Ascending aorta (tissue), 2 donors: ENCODE measurements at regions of chr16 and their contacts with region 1.

Region 1: GRCh38 chr16:50024684-50025536 is at the start of gene CNEP1R1:
- DNase-seq: peak; percentile 81 to 97
- H3K4me3 ChIP-seq: peak within 1 kb of the TSS; percentile 85 to 92
- H3K27ac ChIP-seq: peak within 1 kb of the TSS; percentile 71 to 86
- H3K4me1 ChIP-seq: peaks cover 2 to 7% of the 10 kb centered on the region in 2 donors
- H3K27me3 ChIP-seq: no peaks in the 10 kb centered on the region
- CTCF ChIP-seq: peak; percentile 99 to 100 (median 100)
- total RNA-seq, gene CNEP1R1: 5.9 TPM

Region 2: DNA sequence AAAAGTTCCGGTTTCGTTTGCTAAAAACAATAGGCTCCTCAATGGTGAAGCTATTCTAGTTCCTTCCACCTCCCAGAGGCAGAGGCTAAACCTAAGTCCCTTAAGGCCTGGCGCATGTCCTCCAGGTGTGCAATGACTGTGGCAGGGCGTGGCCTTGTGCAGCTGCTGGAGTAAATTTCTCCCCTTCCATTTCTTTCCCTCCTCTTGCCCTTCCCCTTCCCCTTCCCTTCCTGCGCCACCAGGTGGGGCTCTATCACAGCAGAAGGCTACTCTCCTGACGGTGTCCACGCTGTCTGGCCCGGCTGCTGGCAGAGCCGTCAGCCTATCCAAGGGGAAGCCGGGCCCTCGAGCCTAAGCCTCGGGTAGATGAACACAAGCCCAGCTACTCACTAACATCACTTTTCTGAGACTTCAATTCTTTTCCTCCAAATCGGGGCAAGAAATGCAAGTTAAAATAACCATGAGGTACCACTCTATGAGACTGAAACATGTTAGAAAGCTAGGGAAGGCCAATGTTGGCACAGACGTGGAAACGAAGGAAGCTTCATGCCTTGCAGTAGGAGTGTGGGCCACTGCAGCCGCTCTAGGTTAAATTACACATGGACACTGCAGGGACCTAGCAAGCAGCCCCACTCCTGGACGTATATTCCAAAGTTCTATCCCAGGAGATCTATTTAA is 616.9 kb before region 1 on chr16:
- intact Hi-C with region 1: loop called (anchors 2 kb)
- DNase-seq: peak; percentile 26 to 86
- H3K4me3 ChIP-seq: no peak overlapping the region
- H3K27ac ChIP-seq: no peak overlapping the region
- H3K4me1 ChIP-seq: no peaks in the 10 kb centered on the region
- H3K27me3 ChIP-seq: no peaks in the 10 kb centered on the region
- CTCF ChIP-seq: peak; percentile 82 to 95 (median 91)

Region 3: DNA sequence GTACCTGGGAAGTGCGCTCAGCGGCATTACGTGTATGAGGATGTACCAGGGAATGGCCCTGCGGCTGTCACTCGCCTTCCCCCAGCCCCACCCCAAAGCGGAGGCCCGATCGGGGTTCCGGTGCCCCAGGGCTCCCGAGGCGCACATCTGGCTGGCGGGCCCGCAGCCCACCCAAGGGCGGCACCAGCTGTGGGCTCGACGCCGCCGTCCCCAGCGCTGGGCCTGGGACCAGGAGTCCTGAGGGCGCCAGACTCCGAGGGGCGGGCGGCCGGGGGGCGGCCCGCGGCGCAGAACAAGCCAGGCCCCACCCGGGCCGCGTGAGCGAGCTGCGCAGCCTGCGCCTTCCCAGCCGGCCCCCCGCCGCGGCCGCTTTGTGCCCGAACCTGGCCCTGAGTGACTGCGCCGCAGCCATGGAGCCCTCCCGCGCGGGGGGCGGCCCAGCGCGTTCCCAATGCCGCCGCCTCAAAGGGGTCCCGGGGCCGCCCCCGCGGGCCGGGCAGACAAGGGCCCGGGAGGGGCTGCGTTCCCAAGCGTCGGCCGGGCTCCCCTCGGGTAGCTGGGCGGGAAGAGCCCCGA is 186.4 kb before region 1 on chr16:
- intact Hi-C with region 1: no loop called
- DNase-seq: no peak
- H3K4me3 ChIP-seq: peak overlapping the region; percentile 37 to 56
- H3K27ac ChIP-seq: peak overlapping the region; percentile 22 to 60
- H3K4me1 ChIP-seq: peaks cover 40 to 54% of the 10 kb centered on the region in 2 donors
- H3K27me3 ChIP-seq: no peaks in the 10 kb centered on the region
- CTCF ChIP-seq: no peak

Region 4: DNA sequence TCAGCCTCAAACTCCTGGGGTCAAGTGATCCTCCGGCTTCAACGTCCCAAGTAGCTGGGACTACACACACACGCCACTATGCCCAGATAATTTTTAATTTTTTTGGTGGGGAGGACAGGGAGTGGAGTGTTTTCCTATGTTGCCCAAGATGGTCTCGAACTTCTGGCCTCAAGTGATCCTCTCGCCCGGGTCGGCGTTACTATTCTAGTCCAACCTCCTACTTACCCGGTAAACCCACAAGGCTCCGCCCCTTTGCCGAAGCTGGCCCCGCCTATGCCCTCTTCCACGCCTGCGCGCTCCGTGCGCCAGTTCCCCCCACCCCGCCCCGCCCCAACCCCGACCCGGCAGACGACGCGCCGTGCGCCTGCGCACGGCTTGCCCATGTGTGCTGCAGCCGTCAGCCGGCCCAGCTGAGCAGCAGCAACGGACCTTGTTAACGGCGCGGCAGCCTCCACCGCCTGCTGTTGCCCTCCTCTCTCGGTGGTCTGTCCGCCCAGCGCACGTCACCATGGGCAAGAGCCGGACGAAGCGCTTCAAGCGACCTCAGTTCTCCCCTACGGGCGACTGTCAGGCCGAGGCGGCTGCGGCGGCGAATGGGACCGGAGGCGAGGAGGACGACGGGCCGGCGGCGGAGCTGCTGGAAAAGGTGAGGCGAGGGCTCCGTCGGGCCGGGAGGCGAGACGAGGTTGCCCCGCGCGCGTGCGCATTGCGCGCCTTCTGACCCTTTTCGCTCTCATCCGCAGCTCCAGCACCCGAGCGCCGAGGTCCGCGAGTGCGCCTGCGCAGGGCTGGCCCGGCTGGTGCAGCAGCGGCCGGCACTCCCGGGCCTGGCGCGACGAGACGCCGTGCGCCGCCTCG is 40.9 kb after region 1 on chr16 and contains the start of gene HEATR3:
- intact Hi-C with region 1: loop called (anchors 1 kb)
- DNase-seq: peak; percentile 65 to 95
- H3K4me3 ChIP-seq: peak within 1 kb of the TSS; percentile 80 to 98
- H3K27ac ChIP-seq: peak within 1 kb of the TSS; percentile 90 to 92
- H3K4me1 ChIP-seq: peaks cover 4 to 20% of the 10 kb centered on the region in 2 donors
- H3K27me3 ChIP-seq: no peaks in the 10 kb centered on the region
- CTCF ChIP-seq: no peak
- total RNA-seq, gene HEATR3: 10.4 TPM

Region 5: GRCh38 chr16:50210266-50211038 is 185.5 kb after region 1 on chr16:
- intact Hi-C with region 1: loop called (anchors 1 kb)
- DNase-seq: peak in 1 of 2 donors; percentile 89
- H3K4me3 ChIP-seq: no peak overlapping the region
- H3K27ac ChIP-seq: peak overlapping the region; percentile 17 to 43
- H3K4me1 ChIP-seq: peaks cover 13 to 44% of the 10 kb centered on the region in 2 donors
- H3K27me3 ChIP-seq: no peaks in the 10 kb centered on the region
- CTCF ChIP-seq: peak; percentile 60 to 78 (median 63)

Region 6: DNA sequence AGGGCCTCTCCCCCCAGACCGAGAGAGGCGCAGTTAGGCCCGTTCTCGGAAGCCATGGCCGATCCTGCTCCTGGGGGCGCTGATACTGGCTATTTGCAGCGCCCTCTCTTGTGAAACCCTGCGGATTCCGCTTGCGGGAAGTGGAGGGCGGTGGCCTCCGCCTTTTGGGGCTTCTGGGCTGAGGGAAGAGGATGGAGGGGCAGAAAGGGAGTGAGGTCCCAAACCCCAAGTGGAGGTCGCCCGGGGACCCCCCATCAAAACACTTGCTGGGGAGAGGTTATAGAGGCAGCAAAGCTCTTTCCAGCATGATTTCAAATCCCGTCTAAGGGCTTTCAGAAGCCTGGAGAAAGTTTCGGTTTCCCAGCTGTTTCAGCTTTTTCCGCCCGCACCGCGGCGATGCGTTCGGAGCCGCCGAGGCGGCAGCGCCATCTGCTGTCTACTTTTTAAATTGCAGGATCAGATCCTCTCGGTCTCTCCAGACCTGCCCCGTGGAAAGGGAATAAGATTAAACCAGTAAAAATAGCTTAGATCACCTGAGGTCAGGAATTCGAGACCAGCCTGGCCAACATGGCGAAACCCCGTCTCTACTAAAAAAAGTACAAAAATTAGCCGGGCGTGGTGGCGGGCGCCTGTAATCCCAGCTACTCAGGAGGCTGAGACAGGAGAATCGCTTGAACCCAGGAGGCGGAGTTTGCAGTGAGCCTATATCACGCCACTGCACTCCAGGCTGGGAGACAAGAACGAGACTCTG is 640.4 kb after region 1 on chr16:
- intact Hi-C with region 1: loop called (anchors 2 kb)
- DNase-seq: peak in 1 of 2 donors; percentile 88
- H3K4me3 ChIP-seq: peak overlapping the region; percentile 41 to 61
- H3K27ac ChIP-seq: peak overlapping the region; percentile 58 to 65
- H3K4me1 ChIP-seq: peaks cover 0 to 5% of the 10 kb centered on the region in 2 donors
- H3K27me3 ChIP-seq: no peaks in the 10 kb centered on the region
- CTCF ChIP-seq: peak; percentile 82 to 93 (median 83)

Region 7: DNA sequence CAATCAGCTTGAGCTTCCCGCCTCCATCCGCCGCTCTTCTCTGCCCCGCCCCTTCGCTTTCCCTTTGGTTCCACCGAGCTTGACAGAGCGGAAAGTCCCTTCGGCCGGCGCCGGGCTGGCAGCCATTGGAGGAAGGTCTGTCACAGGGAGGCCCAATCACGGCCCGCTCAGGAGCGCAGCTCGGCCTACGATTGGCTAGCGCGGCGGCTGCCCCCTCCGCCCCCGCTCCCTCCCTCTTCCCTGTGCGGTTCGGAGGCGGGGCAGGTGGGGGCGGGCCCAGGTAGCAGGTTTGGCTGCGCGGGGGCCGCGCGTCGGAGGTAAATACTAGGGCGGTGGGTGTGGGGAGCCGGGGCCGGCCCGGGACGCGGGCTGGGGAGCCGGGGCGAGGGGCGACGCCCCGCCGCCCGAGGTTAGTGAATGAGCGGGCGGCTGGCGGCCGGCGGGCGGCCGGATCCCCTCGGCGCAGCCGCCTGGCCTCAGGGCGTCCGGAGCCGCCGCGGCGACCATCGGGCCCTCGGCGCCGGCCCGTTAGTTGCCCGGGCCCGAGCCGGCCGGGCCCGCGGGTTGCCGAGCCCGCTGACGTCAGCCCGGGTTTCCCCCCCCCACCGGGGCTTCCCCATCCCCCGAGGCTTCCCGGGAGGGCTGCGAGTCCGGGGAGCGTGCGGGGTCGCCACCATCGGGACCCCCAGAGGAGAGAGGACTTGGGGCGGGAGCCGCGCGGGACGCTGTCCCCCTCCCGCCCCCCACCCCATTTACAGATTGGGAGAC is 717.1 kb after region 1 on chr16 and contains the start of gene CYLD:
- intact Hi-C with region 1: loop called (anchors 2 kb)
- DNase-seq: peak; percentile 99 to 100
- H3K4me3 ChIP-seq: peak within 1 kb of the TSS; percentile 69 to 93
- H3K27ac ChIP-seq: peak within 1 kb of the TSS; percentile 86
- H3K4me1 ChIP-seq: peaks cover 0 to 12% of the 10 kb centered on the region in 2 donors
- H3K27me3 ChIP-seq: no peaks in the 10 kb centered on the region
- CTCF ChIP-seq: no peak
- total RNA-seq, gene CYLD: 33.2 TPM

Region 8: GRCh38 chr16:50806099-50807062 is 781.5 kb after region 1 on chr16:
- intact Hi-C with region 1: loop called (anchors 2 kb)
- DNase-seq: peak; percentile 49 to 94
- H3K4me3 ChIP-seq: peak overlapping the region; percentile 34 to 52
- H3K27ac ChIP-seq: peak overlapping the region; percentile 5 to 61
- H3K4me1 ChIP-seq: peaks cover 0 to 4% of the 10 kb centered on the region in 2 donors
- H3K27me3 ChIP-seq: no peaks in the 10 kb centered on the region
- CTCF ChIP-seq: peak; percentile 80 to 94 (median 86)